ENCODE measurements at regions of chr1 and their contacts with region 1.

Region 1: DNA sequence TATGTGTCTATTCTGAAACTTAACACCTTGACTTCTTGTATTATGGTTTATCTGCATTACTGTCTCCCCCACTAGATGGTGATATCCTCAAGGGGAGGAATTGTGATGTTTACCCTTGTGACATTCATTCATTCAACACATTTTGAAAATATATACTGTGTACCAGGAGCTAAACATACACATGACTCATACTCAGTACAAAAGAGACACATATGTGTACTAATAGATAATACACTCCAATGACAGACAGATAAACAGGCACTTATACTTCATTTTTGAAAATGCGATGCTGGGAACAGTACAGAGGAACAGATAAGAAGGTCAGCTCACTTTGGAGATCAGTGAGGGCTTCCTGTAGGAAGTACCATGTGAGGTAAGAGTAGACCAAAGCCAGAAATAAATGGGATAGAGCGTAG is 8.9 kb upstream of the RAB3GAP2 start:
- DNase-seq: peak; percentile 50
- H3K27ac ChIP-seq: no peak overlapping the region
- CTCF ChIP-seq: peak; percentile 44

Region 2: DNA sequence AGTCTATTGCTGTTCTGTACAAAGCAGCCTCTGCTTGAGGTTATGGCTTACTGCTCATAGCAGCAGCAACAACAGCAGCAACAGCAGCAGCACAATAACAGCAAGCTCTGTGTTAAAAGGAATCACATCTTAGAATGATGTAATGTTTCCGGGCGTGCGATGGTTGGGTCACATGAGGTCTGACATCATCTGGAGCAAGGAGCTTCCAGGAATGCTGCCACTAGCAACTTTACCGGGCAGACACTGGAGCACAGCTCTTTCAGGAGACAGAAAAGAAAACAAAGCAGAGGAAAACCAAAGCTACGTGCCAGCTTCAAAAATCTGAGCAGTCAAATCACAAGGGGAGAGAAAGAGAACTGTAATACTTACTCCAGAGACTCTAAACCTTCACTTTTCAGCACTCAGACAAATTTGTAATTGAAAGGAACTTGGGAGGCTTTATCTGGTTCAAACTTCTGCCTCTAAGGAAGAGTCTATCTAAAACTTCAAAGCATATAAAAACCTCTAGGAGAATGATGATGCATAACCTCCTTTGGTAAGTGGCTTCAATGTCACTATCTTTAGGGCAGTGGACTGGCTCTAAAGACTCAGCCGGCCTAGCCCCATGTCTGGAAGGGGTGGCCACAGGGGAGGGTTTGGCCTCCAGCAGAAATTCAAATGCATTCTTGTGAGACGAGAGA is 19.4 kb after region 1 on chr1:
- CTCF ChIA-PET with region 1: interaction called, 11 read pairs
- POLR2A ChIA-PET with region 1: no interaction called
- DNase-seq: peak; percentile 70
- H3K27ac ChIP-seq: peak overlapping the region; percentile 29; the same call in 1 of the 2 replicates
- CTCF ChIP-seq: no peak

Region 3: GRCh38 chr1:220733090-220733601 is 452.0 kb after region 1 on chr1:
- CTCF ChIA-PET with region 1: interaction called, 62 read pairs
- POLR2A ChIA-PET with region 1: no interaction called
- DNase-seq: peak; percentile 93
- H3K27ac ChIP-seq: peak overlapping the region; percentile 19
- CTCF ChIP-seq: peak; percentile 75

Region 4: GRCh38 chr1:220770245-220770918 is 489.2 kb after region 1 on chr1:
- CTCF ChIA-PET with region 1: interaction called, 79 read pairs
- POLR2A ChIA-PET with region 1: no interaction called
- DNase-seq: no peak
- H3K27ac ChIP-seq: no peak overlapping the region
- CTCF ChIP-seq: no peak

Region 5: GRCh38 chr1:220786337-220787068 is 505.3 kb after region 1 on chr1 and contains the start of gene MTARC1:
- CTCF ChIA-PET with region 1: interaction called, 11 read pairs
- POLR2A ChIA-PET with region 1: no interaction called
- DNase-seq: peak; percentile 68
- H3K27ac ChIP-seq: no peak within 1 kb of the TSS
- CTCF ChIP-seq: 0 out of 2 replicates have a peak, but pooled peaks have one; percentile 26

Measured in RWPE1 (cell line).